ENCODE measurements at regions of chr13 and their contacts with region 1.

Region 1: DNA sequence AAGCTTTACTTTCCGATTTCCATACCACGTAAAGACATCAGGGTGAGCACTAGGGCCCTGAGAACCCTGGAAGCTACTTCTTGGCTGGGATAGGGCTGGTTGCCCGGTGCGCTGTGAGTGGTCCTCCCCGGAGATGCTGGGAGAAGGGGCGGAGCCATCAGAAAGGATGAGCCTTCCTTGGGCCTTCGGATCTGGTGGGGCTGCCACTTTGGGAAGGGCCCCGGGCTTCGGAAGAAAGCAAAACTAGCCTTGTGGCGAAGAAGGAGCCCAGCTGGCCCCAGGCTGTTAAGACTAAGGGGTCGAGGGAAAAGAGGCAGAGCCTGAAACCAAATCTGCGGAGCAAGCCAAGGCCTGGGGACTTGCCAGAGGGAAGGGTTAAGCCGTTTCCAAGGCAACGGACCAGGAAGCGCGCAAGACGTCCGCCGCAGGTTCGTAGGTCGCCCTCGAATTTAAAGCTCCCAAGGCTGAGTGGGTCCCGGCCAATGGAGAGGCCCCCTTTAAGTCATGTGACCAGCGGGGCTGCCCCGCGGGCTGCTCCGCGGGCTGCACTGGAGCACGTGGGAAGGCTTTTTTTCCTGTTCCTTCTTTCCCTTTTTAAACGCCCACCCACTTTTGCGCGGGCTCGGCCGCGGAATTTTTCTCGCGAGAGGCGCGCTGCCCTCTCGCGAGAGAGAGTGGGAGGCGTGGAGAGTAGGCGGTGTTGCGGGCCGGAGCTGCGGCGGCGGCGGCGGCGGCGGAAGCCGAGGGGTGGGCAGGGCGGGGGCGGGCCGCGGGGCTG is 426 bp upstream of the AKAP11 start:
- DNase-seq: peak; percentile 95
- H3K4me3 Mint-ChIP-seq: peak overlapping the region; percentile 94
- H3K27ac Mint-ChIP-seq: peak overlapping the region; percentile 88
- H3K4me1 Mint-ChIP-seq: peaks cover 46% of the 10 kb centered on the region
- H3K27me3 Mint-ChIP-seq: no peaks in the 10 kb centered on the region

Region 2: GRCh38 chr13:41132512-41133152 is 1138.9 kb before region 1 on chr13 and contains the start of gene KBTBD6:
- CTCF ChIA-PET with region 1: no interaction called
- intact Hi-C with region 1: loop called (anchors 1 kb)
- DNase-seq: peak; percentile 98
- H3K4me3 Mint-ChIP-seq: peak within 1 kb of the TSS; percentile 92
- H3K27ac Mint-ChIP-seq: peak within 1 kb of the TSS; percentile 87
- H3K4me1 Mint-ChIP-seq: peaks cover 35% of the 10 kb centered on the region
- H3K27me3 Mint-ChIP-seq: no peaks in the 10 kb centered on the region
- total RNA-seq, gene KBTBD6: 3.9 to 4.0 TPM

Region 3: DNA sequence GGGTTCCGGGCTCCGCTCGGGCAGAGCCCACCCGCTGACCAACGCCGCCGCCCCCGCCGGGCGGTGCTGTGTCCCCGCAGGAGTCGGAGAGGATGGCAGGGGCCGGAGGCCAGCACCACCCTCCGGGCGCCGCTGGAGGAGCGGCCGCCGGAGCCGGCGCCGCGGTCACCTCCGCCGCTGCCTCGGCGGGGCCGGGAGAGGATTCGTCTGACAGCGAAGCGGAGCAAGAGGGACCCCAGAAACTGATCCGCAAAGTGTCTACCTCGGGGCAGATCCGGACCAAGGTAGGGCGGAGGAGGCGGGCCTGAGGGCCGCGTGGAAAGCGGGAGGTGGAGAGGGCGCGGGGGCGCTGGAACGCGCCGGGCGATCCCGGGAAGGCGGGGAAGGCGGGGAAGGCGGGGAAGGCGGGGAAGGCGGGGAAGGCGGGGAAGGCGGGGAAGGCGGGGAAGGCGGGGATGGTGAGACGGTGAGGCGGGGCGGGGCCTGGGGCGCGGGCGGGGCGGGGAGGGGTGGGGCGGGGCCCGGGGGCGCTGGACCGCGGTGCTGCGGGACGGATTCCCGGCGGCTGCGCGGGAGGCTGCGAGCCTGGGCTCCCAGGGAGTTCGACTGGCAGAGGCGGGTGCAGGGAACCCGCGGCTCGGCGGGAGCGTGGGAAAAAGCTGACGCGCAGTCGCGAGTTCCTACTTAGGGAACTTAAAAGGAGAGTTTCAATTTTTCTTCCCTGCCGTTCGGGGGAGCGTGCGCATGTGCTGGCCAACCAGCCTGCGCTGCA is 222.7 kb before region 1 on chr13:
- CTCF ChIA-PET with region 1: no interaction called
- intact Hi-C with region 1: loop called (anchors 5 kb)
- DNase-seq: peak; percentile 71
- H3K4me3 Mint-ChIP-seq: peak overlapping the region; percentile 89
- H3K27ac Mint-ChIP-seq: peak overlapping the region; percentile 78
- H3K4me1 Mint-ChIP-seq: peaks cover 21% of the 10 kb centered on the region
- H3K27me3 Mint-ChIP-seq: peaks cover 3% of the 10 kb centered on the region

Region 4: GRCh38 chr13:42377640-42378382 is 106.3 kb after region 1 on chr13:
- CTCF ChIA-PET with region 1: interaction called, 3 read pairs
- intact Hi-C with region 1: loop called (anchors 5 kb)
- DNase-seq: peak; percentile 71
- H3K4me3 Mint-ChIP-seq: no peak overlapping the region
- H3K27ac Mint-ChIP-seq: peak overlapping the region; percentile 95
- H3K4me1 Mint-ChIP-seq: peaks cover 59% of the 10 kb centered on the region
- H3K27me3 Mint-ChIP-seq: no peaks in the 10 kb centered on the region

Region 5: GRCh38 chr13:42497798-42498197 is 226.3 kb after region 1 on chr13:
- CTCF ChIA-PET with region 1: no interaction called
- intact Hi-C with region 1: loop called (anchors 5 kb)
- DNase-seq: peak; percentile 64
- H3K4me3 Mint-ChIP-seq: no peak overlapping the region
- H3K27ac Mint-ChIP-seq: peak overlapping the region; percentile 69
- H3K4me1 Mint-ChIP-seq: peaks cover 40% of the 10 kb centered on the region
- H3K27me3 Mint-ChIP-seq: no peaks in the 10 kb centered on the region

Region 6: GRCh38 chr13:42929886-42930535 is 658.5 kb after region 1 on chr13:
- CTCF ChIA-PET with region 1: no interaction called
- intact Hi-C with region 1: no loop called
- DNase-seq: no peak
- H3K4me3 Mint-ChIP-seq: no peak overlapping the region
- H3K27ac Mint-ChIP-seq: no peak overlapping the region
- H3K4me1 Mint-ChIP-seq: no peaks in the 10 kb centered on the region
- H3K27me3 Mint-ChIP-seq: no peaks in the 10 kb centered on the region

Region 7: GRCh38 chr13:44274452-44275205 is 2003.1 kb after region 1 on chr13:
- CTCF ChIA-PET with region 1: no interaction called
- intact Hi-C with region 1: loop called (anchors 10 kb)
- DNase-seq: peak; percentile 27
- H3K4me3 Mint-ChIP-seq: peak overlapping the region; percentile 70
- H3K27ac Mint-ChIP-seq: peak overlapping the region; percentile 89
- H3K4me1 Mint-ChIP-seq: peaks cover 65% of the 10 kb centered on the region
- H3K27me3 Mint-ChIP-seq: no peaks in the 10 kb centered on the region